WTC11 (cell line): ENCODE measurements at regions of chr1 and their contacts with region 1.

Region 1: GRCh38 chr1:46442317-46443161 is 47.1 kb upstream of the DMBX1 start:
- DNase-seq: peak; percentile 96
- ATAC-seq: peak; percentile 85
- H3K4me3 Mint-ChIP-seq: peak overlapping the region; percentile 86
- H3K27ac Mint-ChIP-seq: peak overlapping the region; percentile 96
- H3K4me1 Mint-ChIP-seq: peaks cover 22% of the 10 kb centered on the region
- H3K27me3 Mint-ChIP-seq: peaks cover 51% of the 10 kb centered on the region
- CTCF ChIP-seq: peak; percentile 96

Region 2: DNA sequence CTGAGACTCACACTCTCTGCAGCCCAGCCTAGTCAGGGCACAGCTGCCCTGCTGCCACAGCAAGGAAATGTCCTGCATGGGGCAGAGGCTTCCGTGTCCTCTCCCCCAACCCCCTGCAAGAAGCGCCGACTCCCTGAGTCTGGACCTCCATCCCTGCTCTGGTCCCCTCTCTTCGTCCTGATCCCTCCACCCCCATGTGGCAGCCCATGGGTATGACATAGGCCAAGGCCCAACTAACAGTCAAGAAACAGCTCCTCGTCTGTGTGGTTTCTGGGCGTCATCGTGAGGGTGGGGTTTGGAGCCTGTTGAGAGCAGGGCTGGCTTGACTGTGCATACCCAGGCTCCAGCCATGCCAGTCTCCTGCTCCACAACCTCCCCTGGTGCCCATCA is 28.9 kb before region 1 on chr1:
- CTCF ChIA-PET with region 1: interaction called, 21 read pairs
- POLR2A ChIA-PET with region 1: no interaction called
- DNase-seq: peak; percentile 71
- ATAC-seq: peak; percentile 84
- H3K4me3 Mint-ChIP-seq: no peak overlapping the region
- H3K27ac Mint-ChIP-seq: no peak overlapping the region
- H3K4me1 Mint-ChIP-seq: 0 out of 2 replicates have a peak, but pooled peaks cover 2% of the 10 kb centered on the region
- H3K27me3 Mint-ChIP-seq: no peaks in the 10 kb centered on the region; the same call in 1 of the 2 replicates
- CTCF ChIP-seq: peak; percentile 55

Region 3: DNA sequence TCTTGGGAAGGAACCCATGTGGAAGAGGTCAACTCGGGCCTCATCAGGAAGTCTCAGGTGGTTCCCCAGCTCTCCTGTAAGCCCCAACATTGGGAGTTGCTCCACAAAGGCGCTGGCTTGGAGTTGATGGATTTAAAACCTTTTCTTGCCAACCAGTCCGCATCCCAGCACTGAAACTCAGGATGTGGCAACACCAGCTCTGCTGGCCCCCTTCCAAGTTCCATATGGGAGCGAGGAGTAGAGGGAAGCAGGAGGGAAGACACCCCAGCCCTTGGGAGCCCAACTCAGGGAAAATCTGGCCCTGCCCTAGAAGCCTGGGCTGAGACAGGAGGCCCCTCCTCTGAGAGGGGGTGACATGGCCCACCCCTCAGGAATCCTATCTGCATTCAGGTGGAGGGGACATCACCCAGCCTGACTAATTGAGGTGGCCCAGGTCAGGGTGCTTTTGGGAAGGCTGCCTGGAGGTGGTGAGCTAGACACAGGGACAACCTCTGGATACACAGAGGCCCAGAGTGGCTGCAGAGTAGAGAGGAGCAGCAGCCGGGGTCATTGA is 13.9 kb after region 1 on chr1:
- CTCF ChIA-PET with region 1: interaction called, 48 read pairs
- POLR2A ChIA-PET with region 1: no interaction called
- DNase-seq: no peak
- ATAC-seq: peak; percentile 40
- H3K4me3 Mint-ChIP-seq: no peak overlapping the region
- H3K27ac Mint-ChIP-seq: no peak overlapping the region
- H3K4me1 Mint-ChIP-seq: peaks cover 36% of the 10 kb centered on the region
- H3K27me3 Mint-ChIP-seq: peaks cover 63% of the 10 kb centered on the region
- CTCF ChIP-seq: no peak

Region 4: DNA sequence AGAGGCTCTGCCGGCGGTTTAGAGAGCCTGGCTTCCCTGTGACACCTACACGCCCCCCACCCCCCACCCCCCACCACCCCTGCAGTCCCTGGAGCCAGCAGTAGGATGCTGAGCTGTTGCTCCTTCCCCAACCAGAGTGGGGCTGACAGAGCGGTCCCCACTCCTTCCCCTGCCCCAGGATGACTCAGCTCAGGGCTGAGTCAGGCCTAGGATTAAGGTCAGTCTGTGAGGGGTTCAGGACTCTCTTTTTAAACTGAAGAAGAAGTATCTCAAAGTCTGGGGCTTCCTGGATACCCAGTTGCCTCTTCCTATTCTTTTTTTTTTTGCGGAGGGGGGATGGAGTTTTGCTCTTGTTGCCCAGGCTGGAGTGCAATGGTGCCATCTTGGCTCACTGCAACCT is 66.2 kb after region 1 on chr1:
- CTCF ChIA-PET with region 1: interaction called, 13 read pairs
- POLR2A ChIA-PET with region 1: no interaction called
- DNase-seq: no peak
- ATAC-seq: no peak; the same call in 1 of the 2 replicates
- H3K4me3 Mint-ChIP-seq: no peak overlapping the region
- H3K27ac Mint-ChIP-seq: no peak overlapping the region
- H3K4me1 Mint-ChIP-seq: peaks cover 25% of the 10 kb centered on the region
- H3K27me3 Mint-ChIP-seq: peaks cover 15% of the 10 kb centered on the region
- CTCF ChIP-seq: no peak

Region 5: GRCh38 chr1:46527474-46528296 is 85.1 kb after region 1 on chr1:
- CTCF ChIA-PET with region 1: interaction called, 241 read pairs
- POLR2A ChIA-PET with region 1: interaction called, 5 read pairs
- DNase-seq: peak; percentile 91
- ATAC-seq: peak; percentile 60
- H3K4me3 Mint-ChIP-seq: no peak overlapping the region
- H3K27ac Mint-ChIP-seq: no peak overlapping the region
- H3K4me1 Mint-ChIP-seq: peaks cover 56% of the 10 kb centered on the region
- H3K27me3 Mint-ChIP-seq: peaks cover 97% of the 10 kb centered on the region
- CTCF ChIP-seq: peak; percentile 75

Region 6: DNA sequence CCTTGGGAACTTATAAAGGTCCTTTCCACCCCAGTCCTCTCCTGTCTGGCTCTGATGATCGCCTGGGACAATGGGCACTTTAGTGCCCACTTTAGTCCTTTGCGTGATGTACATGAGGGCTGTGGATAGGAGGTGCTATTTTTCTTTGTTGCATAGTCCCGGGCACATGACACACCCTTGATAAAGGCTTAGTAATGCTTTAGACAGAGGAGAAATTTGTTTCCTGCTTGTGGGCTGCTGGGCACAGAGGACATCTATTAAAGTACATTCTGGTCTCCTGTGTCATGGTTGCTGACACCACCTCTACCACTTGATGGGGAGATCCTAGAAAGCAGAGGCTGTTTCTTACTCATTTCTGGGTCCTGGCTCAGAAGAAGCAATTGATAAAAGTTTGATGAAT is 114.3 kb after region 1 on chr1:
- CTCF ChIA-PET with region 1: interaction called, 16 read pairs
- POLR2A ChIA-PET with region 1: interaction called, 3 read pairs
- DNase-seq: no peak
- ATAC-seq: no peak
- H3K4me3 Mint-ChIP-seq: no peak overlapping the region
- H3K27ac Mint-ChIP-seq: no peak overlapping the region
- H3K4me1 Mint-ChIP-seq: peaks cover 23% of the 10 kb centered on the region
- H3K27me3 Mint-ChIP-seq: no peaks in the 10 kb centered on the region
- CTCF ChIP-seq: no peak

Region 7: GRCh38 chr1:46724991-46725735 is 282.6 kb after region 1 on chr1:
- CTCF ChIA-PET with region 1: interaction called, 21 read pairs
- POLR2A ChIA-PET with region 1: no interaction called
- DNase-seq: peak; percentile 69
- ATAC-seq: peak; percentile 97
- H3K4me3 Mint-ChIP-seq: no peak overlapping the region
- H3K27ac Mint-ChIP-seq: no peak overlapping the region
- H3K4me1 Mint-ChIP-seq: peaks cover 16% of the 10 kb centered on the region
- H3K27me3 Mint-ChIP-seq: peaks cover 14% of the 10 kb centered on the region
- CTCF ChIP-seq: peak; percentile 53